ENCODE measurements at regions of chr19 and their contacts with region 1.

Region 1: GRCh38 chr19:56121180-56122167 is at the start of gene ZNF787:
- DNase-seq: peak; percentile 96
- ATAC-seq: peak; percentile 89
- H3K4me3 Mint-ChIP-seq: peak within 1 kb of the TSS; percentile 86
- H3K27ac Mint-ChIP-seq: peak within 1 kb of the TSS; percentile 95
- H3K4me1 Mint-ChIP-seq: peaks cover 42% of the 10 kb centered on the region
- H3K27me3 Mint-ChIP-seq: no peaks in the 10 kb centered on the region
- total RNA-seq, gene ZNF787: 30.4 to 31.3 TPM

Region 2: GRCh38 chr19:55902080-55902751 is 219.3 kb before region 1 on chr19:
- CTCF ChIA-PET with region 1: no interaction called
- POLR2A ChIA-PET with region 1: no interaction called
- DNase-seq: no peak
- ATAC-seq: no peak
- H3K4me3 Mint-ChIP-seq: no peak overlapping the region
- H3K27ac Mint-ChIP-seq: no peak overlapping the region
- H3K4me1 Mint-ChIP-seq: no peaks in the 10 kb centered on the region
- H3K27me3 Mint-ChIP-seq: no peaks in the 10 kb centered on the region

Region 3: DNA sequence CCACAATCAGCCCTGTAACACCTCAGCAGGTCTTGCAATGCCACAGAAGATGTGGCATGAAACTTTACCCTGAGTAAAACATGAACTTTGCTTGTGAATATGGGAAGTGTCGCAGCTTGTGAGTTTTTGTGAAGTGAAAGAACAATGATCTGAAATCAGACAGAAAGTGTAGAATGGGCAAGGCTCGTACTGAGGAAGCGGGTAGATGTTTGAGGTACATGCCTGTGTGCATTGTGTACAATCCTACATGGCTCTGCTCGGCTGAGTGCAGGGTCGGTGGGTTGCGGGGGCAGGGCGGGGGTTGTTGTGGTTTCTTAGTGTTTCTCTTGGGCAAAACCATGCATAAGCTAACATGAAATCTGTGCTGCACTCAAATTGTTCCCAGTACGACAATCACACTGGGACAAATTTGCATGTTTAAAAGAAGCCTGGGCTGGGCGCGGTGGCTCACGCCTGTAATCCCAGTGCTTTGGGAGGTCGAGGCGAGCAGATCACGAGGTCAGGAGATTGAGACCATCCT is 190.4 kb before region 1 on chr19:
- CTCF ChIA-PET with region 1: no interaction called
- POLR2A ChIA-PET with region 1: no interaction called
- DNase-seq: no peak
- ATAC-seq: no peak
- H3K4me3 Mint-ChIP-seq: no peak overlapping the region
- H3K27ac Mint-ChIP-seq: no peak overlapping the region
- H3K4me1 Mint-ChIP-seq: no peaks in the 10 kb centered on the region
- H3K27me3 Mint-ChIP-seq: no peaks in the 10 kb centered on the region

Region 4: GRCh38 chr19:56140583-56141416 is 19.3 kb after region 1 on chr19 and contains the start of gene ZNF444:
- CTCF ChIA-PET with region 1: interaction called, 3 read pairs
- POLR2A ChIA-PET with region 1: interaction called, 10 read pairs
- DNase-seq: peak; percentile 99
- ATAC-seq: peak; percentile 95
- H3K4me3 Mint-ChIP-seq: peak within 1 kb of the TSS; percentile 82
- H3K27ac Mint-ChIP-seq: peak within 1 kb of the TSS; percentile 87
- H3K4me1 Mint-ChIP-seq: peaks cover 40% of the 10 kb centered on the region
- H3K27me3 Mint-ChIP-seq: no peaks in the 10 kb centered on the region
- total RNA-seq, gene ZNF444: 29.3 to 30.1 TPM

Region 5: GRCh38 chr19:56174550-56174949 is 53.1 kb after region 1 on chr19:
- CTCF ChIA-PET with region 1: no interaction called
- POLR2A ChIA-PET with region 1: no interaction called
- DNase-seq: no peak
- ATAC-seq: no peak
- H3K4me3 Mint-ChIP-seq: no peak overlapping the region
- H3K27ac Mint-ChIP-seq: no peak overlapping the region
- H3K4me1 Mint-ChIP-seq: peaks cover 4% of the 10 kb centered on the region
- H3K27me3 Mint-ChIP-seq: no peaks in the 10 kb centered on the region